ENCODE measurements at regions of chr9 and their contacts with region 1.

Region 1: DNA sequence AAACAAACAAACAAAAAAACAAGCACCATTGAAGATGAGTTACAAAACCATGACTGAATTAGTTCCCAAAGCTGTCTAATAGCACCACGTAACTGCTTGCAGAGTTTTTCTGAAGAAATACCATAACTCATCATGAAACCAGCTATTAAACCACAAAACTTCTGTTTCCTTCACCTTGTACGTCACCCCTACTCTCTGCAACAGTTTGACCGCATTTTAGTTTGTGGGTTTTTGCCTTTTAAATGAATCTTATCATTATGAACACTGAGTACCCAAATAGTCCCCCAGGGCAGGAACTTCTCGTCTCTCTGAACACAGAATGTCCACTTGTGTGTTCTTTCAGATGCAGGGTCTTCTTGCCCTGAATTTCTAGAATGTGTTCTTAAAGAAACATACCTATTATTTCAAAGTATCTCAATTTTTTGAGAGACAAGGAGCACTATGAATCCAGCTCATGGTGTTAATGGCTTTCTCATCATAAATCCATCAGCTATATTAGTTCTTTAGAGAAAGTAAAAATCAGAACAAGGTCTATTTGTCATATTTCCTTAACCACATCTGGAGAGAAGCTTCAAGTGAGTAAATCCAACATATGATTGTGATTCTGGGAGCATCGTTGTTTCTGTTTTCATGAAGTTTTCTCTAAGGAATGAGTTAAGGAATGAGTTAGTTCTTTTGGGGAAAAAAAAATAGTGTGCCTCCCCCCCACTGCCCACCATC is 210.6 kb downstream of the AUH start:
- DNase-seq: peak in 1 of 2 donors; percentile 87
- ATAC-seq: peak; percentile 83 to 93 (median 86)
- H3K4me3 ChIP-seq: no peak overlapping the region
- H3K4me3 Mint-ChIP-seq: peak overlapping the region; percentile 75
- H3K27ac ChIP-seq: peak overlapping the region; percentile 88
- H3K27ac Mint-ChIP-seq: peak overlapping the region; percentile 83 to 93
- H3K4me1 ChIP-seq: peaks cover 72% of the 10 kb centered on the region
- H3K4me1 Mint-ChIP-seq: peaks cover 66 to 69% of the 10 kb centered on the region in 2 donors
- H3K27me3 ChIP-seq: no peaks in the 10 kb centered on the region
- H3K27me3 Mint-ChIP-seq: no peaks in the 10 kb centered on the region
- CTCF ChIP-seq: no peak

Region 2: GRCh38 chr9:90801583-90802289 is 349.4 kb before region 1 on chr9 and contains the start of gene SYK:
- intact Hi-C with region 1: loop called (anchors 5 kb)
- DNase-seq: peak in 1 of 2 donors; percentile 45
- ATAC-seq: peak; percentile 66 to 82 (median 69)
- H3K4me3 ChIP-seq: peak within 1 kb of the TSS; percentile 98
- H3K4me3 Mint-ChIP-seq: peak within 1 kb of the TSS; percentile 98
- H3K27ac ChIP-seq: peak within 1 kb of the TSS; percentile 86
- H3K27ac Mint-ChIP-seq: peak within 1 kb of the TSS; percentile 93 to 97
- H3K4me1 ChIP-seq: peaks cover 9% of the 10 kb centered on the region
- H3K4me1 Mint-ChIP-seq: peaks cover 50 to 64% of the 10 kb centered on the region in 2 donors
- H3K27me3 ChIP-seq: no peaks in the 10 kb centered on the region
- H3K27me3 Mint-ChIP-seq: no peaks in the 10 kb centered on the region
- CTCF ChIP-seq: no peak
- total RNA-seq, gene SYK: 75.5 to 104 (median 78.0) TPM

Region 3: DNA sequence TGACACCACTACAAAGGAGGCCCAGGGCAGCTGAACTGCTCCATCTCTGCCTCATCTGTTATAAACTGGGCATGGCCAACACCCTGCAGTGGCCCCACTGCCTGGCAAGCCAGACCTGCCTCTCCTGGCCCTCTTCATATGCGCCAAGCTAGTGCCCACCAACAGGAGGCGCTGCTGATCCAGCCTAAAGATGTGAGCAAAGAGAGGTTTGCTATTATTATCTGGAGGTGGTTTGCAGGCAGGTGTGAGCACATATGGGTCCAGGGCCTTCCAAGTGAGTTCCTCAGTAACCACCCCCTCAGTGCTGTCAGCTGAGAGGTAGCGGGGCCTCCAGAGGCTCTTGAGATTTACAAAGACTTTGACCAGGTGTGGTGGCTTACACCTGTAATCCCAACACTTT is 117.4 kb before region 1 on chr9:
- intact Hi-C with region 1: no loop called
- DNase-seq: peak in 1 of 2 donors; percentile 77
- ATAC-seq: no peak
- H3K4me3 ChIP-seq: no peak overlapping the region
- H3K4me3 Mint-ChIP-seq: no peak overlapping the region
- H3K27ac ChIP-seq: no peak overlapping the region
- H3K27ac Mint-ChIP-seq: no peak overlapping the region
- H3K4me1 ChIP-seq: peaks cover 11% of the 10 kb centered on the region
- H3K4me1 Mint-ChIP-seq: peaks cover 17 to 24% of the 10 kb centered on the region in 2 donors
- H3K27me3 ChIP-seq: no peaks in the 10 kb centered on the region
- H3K27me3 Mint-ChIP-seq: peaks cover 0 to 9% of the 10 kb centered on the region in 2 donors
- CTCF ChIP-seq: no peak

Region 4: GRCh38 chr9:91131433-91131839 is 19.7 kb before region 1 on chr9:
- intact Hi-C with region 1: loop called (anchors 1 kb)
- DNase-seq: peak in 1 of 2 donors; percentile 67
- ATAC-seq: peak; percentile 89 to 98 (median 97)
- H3K4me3 ChIP-seq: no peak overlapping the region
- H3K4me3 Mint-ChIP-seq: peak overlapping the region; percentile 85
- H3K27ac ChIP-seq: peak overlapping the region; percentile 79
- H3K27ac Mint-ChIP-seq: peak overlapping the region; percentile 88 to 95
- H3K4me1 ChIP-seq: peaks cover 15% of the 10 kb centered on the region
- H3K4me1 Mint-ChIP-seq: peaks cover 20 to 23% of the 10 kb centered on the region in 2 donors
- H3K27me3 ChIP-seq: no peaks in the 10 kb centered on the region
- H3K27me3 Mint-ChIP-seq: no peaks in the 10 kb centered on the region
- CTCF ChIP-seq: no peak

Region 5: GRCh38 chr9:91193658-91194391 is 42.7 kb after region 1 on chr9:
- intact Hi-C with region 1: loop called (anchors 1 kb)
- DNase-seq: peak; percentile 69 to 75
- ATAC-seq: peak; percentile 45 to 76 (median 74)
- H3K4me3 ChIP-seq: peak overlapping the region; percentile 44
- H3K4me3 Mint-ChIP-seq: peak overlapping the region; percentile 92
- H3K27ac ChIP-seq: peak overlapping the region; percentile 81
- H3K27ac Mint-ChIP-seq: peak overlapping the region; percentile 95 to 98
- H3K4me1 ChIP-seq: peaks cover 48% of the 10 kb centered on the region
- H3K4me1 Mint-ChIP-seq: peaks cover 55 to 61% of the 10 kb centered on the region in 2 donors
- H3K27me3 ChIP-seq: no peaks in the 10 kb centered on the region
- H3K27me3 Mint-ChIP-seq: no peaks in the 10 kb centered on the region
- CTCF ChIP-seq: no peak

Region 6: DNA sequence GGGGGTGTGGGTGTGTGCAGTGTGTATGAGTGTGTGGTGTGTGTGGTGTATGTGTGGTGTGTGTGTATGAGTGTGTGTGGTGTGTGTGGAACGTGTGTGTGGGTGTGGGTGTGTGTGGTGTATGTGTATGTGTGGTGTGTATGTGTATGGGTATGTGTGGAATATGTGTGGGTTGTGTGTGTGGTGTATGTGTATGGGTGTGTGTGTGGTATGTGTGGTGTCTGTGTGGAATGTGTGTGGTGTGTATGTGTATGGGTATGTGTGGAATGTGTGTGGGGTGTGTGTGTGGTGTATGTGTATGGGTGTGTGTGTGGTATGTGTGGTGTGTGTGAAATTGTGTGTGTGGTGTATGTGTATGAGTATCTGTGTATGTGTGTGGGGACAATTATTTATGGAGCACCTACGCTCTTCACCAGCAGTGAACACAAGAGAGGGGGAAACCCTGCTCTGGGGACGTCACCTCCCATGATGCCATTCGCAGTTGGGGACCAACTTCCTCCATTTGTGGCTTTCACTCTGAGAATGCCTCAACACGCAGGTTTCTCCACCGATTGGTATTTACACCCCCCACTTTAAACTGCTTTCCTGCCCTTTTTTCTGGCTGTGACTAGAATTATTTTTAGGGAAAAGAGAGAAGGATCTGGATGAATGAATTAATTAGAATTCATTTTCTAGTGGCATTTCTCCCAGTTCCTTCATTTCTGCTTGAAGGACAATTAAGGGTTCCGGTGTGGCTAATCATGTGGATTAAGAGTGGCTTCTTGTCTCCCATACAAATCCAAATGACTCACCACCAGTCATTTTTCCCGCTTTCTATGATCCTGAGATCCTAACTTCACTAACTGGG is 560.8 kb after region 1 on chr9:
- intact Hi-C with region 1: loop called (anchors 5 kb)
- DNase-seq: peak; percentile 64 to 79
- ATAC-seq: peak; percentile 89 to 95 (median 94)
- H3K4me3 ChIP-seq: no peak overlapping the region
- H3K4me3 Mint-ChIP-seq: no peak overlapping the region
- H3K27ac ChIP-seq: peak overlapping the region; percentile 59
- H3K27ac Mint-ChIP-seq: no peak overlapping the region
- H3K4me1 ChIP-seq: peaks cover 29% of the 10 kb centered on the region
- H3K4me1 Mint-ChIP-seq: peaks cover 0 to 6% of the 10 kb centered on the region in 2 donors
- H3K27me3 ChIP-seq: peaks cover 2% of the 10 kb centered on the region
- H3K27me3 Mint-ChIP-seq: peaks cover 4 to 9% of the 10 kb centered on the region in 2 donors
- CTCF ChIP-seq: no peak